ENCODE measurements at regions of chr18 and their contacts with region 1.

Region 1: GRCh38 chr18:77061946-77062517 is 70.6 kb downstream of the MBP start:
- DNase-seq: peak in 1 of 9 donors; percentile 32
- ATAC-seq: peak; percentile 64
- H3K4me3 ChIP-seq: peak overlapping the region; percentile 16
- H3K4me3 Mint-ChIP-seq: peak overlapping the region; percentile 56 to 89 (median 74)
- H3K27ac ChIP-seq: peak overlapping the region; percentile 82
- H3K27ac Mint-ChIP-seq: peak overlapping the region; percentile 96 to 100 (median 99)
- H3K4me1 ChIP-seq: peaks cover 64 to 90% of the 10 kb centered on the region in 2 donors
- H3K4me1 Mint-ChIP-seq: peaks cover 48 to 89% (median 83%) of the 10 kb centered on the region in 7 donors
- H3K27me3 ChIP-seq: no peaks in the 10 kb centered on the region
- H3K27me3 Mint-ChIP-seq: no peaks in the 10 kb centered on the region

Region 2: GRCh38 chr18:76771192-76771799 is 290.7 kb before region 1 on chr18:
- CTCF ChIA-PET with region 1: no interaction called
- POLR2A ChIA-PET with region 1: no interaction called
- intact Hi-C with region 1: no loop called
- DNase-seq: no peak
- ATAC-seq: no peak
- H3K4me3 ChIP-seq: no peak overlapping the region
- H3K4me3 Mint-ChIP-seq: no peak overlapping the region
- H3K27ac ChIP-seq: no peak overlapping the region
- H3K27ac Mint-ChIP-seq: no peak overlapping the region
- H3K4me1 ChIP-seq: no peaks in the 10 kb centered on the region
- H3K4me1 Mint-ChIP-seq: peaks cover 0 to 8% (median 0%) of the 10 kb centered on the region in 7 donors
- H3K27me3 ChIP-seq: no peaks in the 10 kb centered on the region
- H3K27me3 Mint-ChIP-seq: peaks cover 0 to 25% (median 18%) of the 10 kb centered on the region in 5 donors

Region 3: GRCh38 chr18:76822510-76823160 is 239.4 kb before region 1 on chr18 and contains the start of gene ZNF236:
- CTCF ChIA-PET with region 1: no interaction called
- POLR2A ChIA-PET with region 1: interaction called, 6 read pairs
- intact Hi-C with region 1: loop called (anchors 1 kb)
- DNase-seq: peak; percentile 38 to 78 (median 61)
- ATAC-seq: peak; percentile 76
- H3K4me3 ChIP-seq: peak within 1 kb of the TSS; percentile 99
- H3K4me3 Mint-ChIP-seq: peak within 1 kb of the TSS; percentile 88 to 96 (median 93)
- H3K27ac ChIP-seq: peak within 1 kb of the TSS; percentile 84
- H3K27ac Mint-ChIP-seq: peak within 1 kb of the TSS; percentile 89 to 97 (median 96)
- H3K4me1 ChIP-seq: peaks cover 8 to 10% of the 10 kb centered on the region in 2 donors
- H3K4me1 Mint-ChIP-seq: peaks cover 38 to 65% (median 56%) of the 10 kb centered on the region in 7 donors
- H3K27me3 ChIP-seq: no peaks in the 10 kb centered on the region
- H3K27me3 Mint-ChIP-seq: no peaks in the 10 kb centered on the region
- total RNA-seq, gene ZNF236: 25.9 to 34.5 (median 30.6) TPM

Region 4: GRCh38 chr18:77000527-77000926 is 61.5 kb before region 1 on chr18:
- CTCF ChIA-PET with region 1: interaction called, 5 read pairs
- POLR2A ChIA-PET with region 1: interaction called, 3 read pairs
- intact Hi-C with region 1: loop called in 1 of 2 experiments (anchors 2 kb)
- DNase-seq: peak in 7 of 9 donors; percentile 29 to 64 (median 50)
- ATAC-seq: peak; percentile 68
- H3K4me3 ChIP-seq: no peak overlapping the region
- H3K4me3 Mint-ChIP-seq: no peak overlapping the region
- H3K27ac ChIP-seq: no peak overlapping the region
- H3K27ac Mint-ChIP-seq: peak overlapping the region in 2 of 9 donors; percentile 11 to 41
- H3K4me1 ChIP-seq: peaks cover 7 to 10% of the 10 kb centered on the region in 2 donors
- H3K4me1 Mint-ChIP-seq: peaks cover 13 to 30% (median 28%) of the 10 kb centered on the region in 7 donors
- H3K27me3 ChIP-seq: no peaks in the 10 kb centered on the region
- H3K27me3 Mint-ChIP-seq: peaks cover 0 to 4% (median 0%) of the 10 kb centered on the region in 5 donors

Region 5: GRCh38 chr18:77020561-77020960 is 41.5 kb before region 1 on chr18:
- CTCF ChIA-PET with region 1: no interaction called
- POLR2A ChIA-PET with region 1: no interaction called
- intact Hi-C with region 1: no loop called
- DNase-seq: no peak
- ATAC-seq: no peak
- H3K4me3 ChIP-seq: no peak overlapping the region
- H3K4me3 Mint-ChIP-seq: no peak overlapping the region
- H3K27ac ChIP-seq: no peak overlapping the region
- H3K27ac Mint-ChIP-seq: peak overlapping the region in 1 of 9 donors; percentile 83
- H3K4me1 ChIP-seq: no peaks in the 10 kb centered on the region
- H3K4me1 Mint-ChIP-seq: peaks cover 15 to 69% (median 29%) of the 10 kb centered on the region in 7 donors
- H3K27me3 ChIP-seq: no peaks in the 10 kb centered on the region
- H3K27me3 Mint-ChIP-seq: no peaks in the 10 kb centered on the region

Region 6: DNA sequence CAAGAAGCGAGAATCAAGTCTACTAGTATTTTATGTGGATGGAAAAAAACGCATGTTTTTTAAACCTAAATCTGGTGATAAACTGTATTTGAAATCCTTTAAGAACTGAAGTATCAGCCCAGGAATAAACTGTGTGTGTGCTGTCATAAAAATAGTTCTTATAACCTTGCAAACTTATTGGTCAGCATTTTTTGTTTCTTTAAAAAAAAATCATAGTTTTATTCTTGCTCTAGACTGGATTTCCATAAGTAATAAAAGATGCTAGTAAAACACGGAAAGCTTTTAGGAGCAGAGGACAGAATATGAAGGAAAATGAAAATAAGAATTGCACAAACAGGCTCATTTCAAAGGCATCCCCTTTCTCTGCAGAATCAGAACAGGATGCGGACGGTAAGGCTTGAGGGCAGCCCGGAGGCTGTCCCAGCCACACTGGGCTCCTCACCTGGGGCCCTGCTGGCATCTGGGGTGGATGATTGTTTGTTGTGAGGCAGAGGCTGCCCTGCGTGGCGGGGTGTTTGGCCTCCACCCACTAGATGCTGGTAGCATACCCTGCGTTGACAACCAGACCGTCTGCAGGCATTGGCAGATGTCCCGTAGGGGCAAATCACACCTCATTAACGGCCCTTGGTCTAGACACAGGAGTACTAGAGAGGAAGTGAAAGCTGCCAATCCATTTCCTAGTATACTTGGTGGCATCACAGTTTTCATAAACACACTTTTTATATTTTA is 18.1 kb after region 1 on chr18:
- CTCF ChIA-PET with region 1: interaction called, 7 read pairs
- POLR2A ChIA-PET with region 1: interaction called, 4 read pairs
- intact Hi-C with region 1: loop called in 1 of 2 experiments (anchors 1 kb)
- DNase-seq: no peak
- ATAC-seq: peak; percentile 80
- H3K4me3 ChIP-seq: no peak overlapping the region
- H3K4me3 Mint-ChIP-seq: peak overlapping the region in 2 of 10 donors; percentile 21 to 25
- H3K27ac ChIP-seq: no peak overlapping the region
- H3K27ac Mint-ChIP-seq: peak overlapping the region in 8 of 9 donors; percentile 3 to 59 (median 38)
- H3K4me1 ChIP-seq: peaks cover 27 to 53% of the 10 kb centered on the region in 2 donors
- H3K4me1 Mint-ChIP-seq: peaks cover 27 to 94% (median 82%) of the 10 kb centered on the region in 7 donors
- H3K27me3 ChIP-seq: no peaks in the 10 kb centered on the region
- H3K27me3 Mint-ChIP-seq: no peaks in the 10 kb centered on the region

Region 7: GRCh38 chr18:77101410-77102258 is 39.6 kb after region 1 on chr18:
- CTCF ChIA-PET with region 1: interaction called, 3 read pairs
- POLR2A ChIA-PET with region 1: interaction called, 14 read pairs
- intact Hi-C with region 1: loop called (anchors 1 kb)
- DNase-seq: peak in 2 of 9 donors; percentile 26 to 73
- ATAC-seq: peak; percentile 62
- H3K4me3 ChIP-seq: peak overlapping the region; percentile 45
- H3K4me3 Mint-ChIP-seq: peak overlapping the region; percentile 65 to 92 (median 82)
- H3K27ac ChIP-seq: peak overlapping the region; percentile 73
- H3K27ac Mint-ChIP-seq: peak overlapping the region; percentile 94 to 99 (median 98)
- H3K4me1 ChIP-seq: peaks cover 88 to 94% of the 10 kb centered on the region in 2 donors
- H3K4me1 Mint-ChIP-seq: peaks cover 71 to 100% (median 94%) of the 10 kb centered on the region in 7 donors
- H3K27me3 ChIP-seq: no peaks in the 10 kb centered on the region
- H3K27me3 Mint-ChIP-seq: no peaks in the 10 kb centered on the region

Region 8: DNA sequence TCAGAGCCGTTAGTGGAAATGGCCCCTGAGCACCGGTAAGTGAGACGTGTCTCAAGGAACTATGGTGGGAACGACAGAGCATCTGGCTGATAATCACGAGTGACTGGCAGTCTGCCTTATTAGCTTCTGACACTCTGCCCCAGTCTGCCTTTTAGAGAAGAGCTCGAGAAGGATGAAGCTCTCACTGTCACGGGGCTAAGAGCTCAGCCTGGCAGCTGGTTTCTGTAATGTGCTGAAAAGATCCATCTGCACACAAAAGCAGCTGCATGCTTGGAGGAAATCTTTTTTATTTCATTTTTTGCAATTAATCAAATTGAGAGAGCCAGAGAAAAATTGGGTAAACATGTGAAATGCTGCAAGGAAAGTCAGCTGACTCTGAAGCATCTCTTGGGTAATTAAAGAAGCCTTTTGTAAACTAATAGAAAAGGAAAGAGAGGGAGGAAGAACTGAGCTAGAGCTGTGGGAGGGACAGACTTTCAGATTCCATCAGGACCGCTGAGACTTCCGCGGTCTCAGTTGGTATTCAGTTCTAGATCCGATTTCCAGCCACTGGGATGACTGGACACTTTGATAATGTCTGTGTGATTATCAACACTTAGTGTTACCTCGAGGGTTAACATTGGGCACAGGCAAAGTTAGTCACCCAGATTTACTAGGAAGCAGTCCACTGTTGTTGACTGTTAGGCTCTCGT is 46.1 kb after region 1 on chr18:
- CTCF ChIA-PET with region 1: interaction called, 3 read pairs
- POLR2A ChIA-PET with region 1: interaction called, 14 read pairs
- intact Hi-C with region 1: loop called in 1 of 2 experiments (anchors 1 kb)
- DNase-seq: peak in 1 of 9 donors; percentile 29
- ATAC-seq: peak; percentile 43
- H3K4me3 ChIP-seq: peak overlapping the region; percentile 15
- H3K4me3 Mint-ChIP-seq: peak overlapping the region; percentile 17 to 92 (median 64)
- H3K27ac ChIP-seq: peak overlapping the region; percentile 70
- H3K27ac Mint-ChIP-seq: peak overlapping the region; percentile 78 to 99 (median 97)
- H3K4me1 ChIP-seq: peaks cover 61 to 69% of the 10 kb centered on the region in 2 donors
- H3K4me1 Mint-ChIP-seq: peaks cover 78 to 98% (median 96%) of the 10 kb centered on the region in 7 donors
- H3K27me3 ChIP-seq: no peaks in the 10 kb centered on the region
- H3K27me3 Mint-ChIP-seq: no peaks in the 10 kb centered on the region

Region 9: GRCh38 chr18:77124452-77124922 is 62.5 kb after region 1 on chr18:
- CTCF ChIA-PET with region 1: no interaction called
- POLR2A ChIA-PET with region 1: interaction called, 5 read pairs
- intact Hi-C with region 1: loop called in 1 of 2 experiments (anchors 1 kb)
- DNase-seq: peak in 2 of 9 donors; percentile 33 to 56
- ATAC-seq: peak; percentile 46
- H3K4me3 ChIP-seq: peak overlapping the region; percentile 31
- H3K4me3 Mint-ChIP-seq: peak overlapping the region; percentile 65 to 97 (median 77)
- H3K27ac ChIP-seq: peak overlapping the region; percentile 62
- H3K27ac Mint-ChIP-seq: peak overlapping the region; percentile 21 to 92 (median 81)
- H3K4me1 ChIP-seq: peaks cover 77 to 81% of the 10 kb centered on the region in 2 donors
- H3K4me1 Mint-ChIP-seq: peaks cover 70 to 100% (median 98%) of the 10 kb centered on the region in 7 donors
- H3K27me3 ChIP-seq: no peaks in the 10 kb centered on the region
- H3K27me3 Mint-ChIP-seq: no peaks in the 10 kb centered on the region

Measured in naive thymus-derived CD4-positive, alpha-beta T cell (primary cell).